ENCODE measurements at regions of chr3 and their contacts with region 1.

Region 1: DNA sequence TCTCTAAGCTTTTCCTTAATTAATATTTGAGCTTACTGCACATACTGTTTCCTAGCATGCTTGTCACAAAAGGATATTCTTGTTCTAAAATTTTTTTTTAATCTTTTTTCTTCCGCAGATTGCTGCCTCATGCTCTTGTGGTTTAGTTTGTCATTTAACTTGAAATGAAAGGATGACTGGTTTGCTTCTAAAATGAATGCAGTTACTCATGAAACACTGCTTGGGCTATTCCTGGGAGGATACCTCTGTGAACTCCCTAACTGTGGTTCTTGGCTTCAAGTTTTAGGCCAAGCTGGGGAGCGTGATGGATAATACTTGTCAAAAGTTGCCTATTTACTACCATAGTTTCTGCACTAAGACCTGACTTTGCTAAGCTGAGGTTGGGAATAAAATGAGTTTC is 64.0 kb downstream of the USP13 start:
- DNase-seq: no peak
- ATAC-seq: peak in 1 of 8 donors; percentile 44
- H3K4me3 ChIP-seq: no peak overlapping the region
- H3K27ac ChIP-seq: peak overlapping the region in 7 of 10 donors; percentile 1 to 89 (median 30)
- H3K4me1 ChIP-seq: peaks cover 0 to 29% (median 9%) of the 10 kb centered on the region in 9 donors
- H3K27me3 ChIP-seq: no peaks in the 10 kb centered on the region
- CTCF ChIP-seq: no peak

Region 2: GRCh38 chr3:179473565-179473964 is 243.2 kb before region 1 on chr3:
- intact Hi-C with region 1: no loop called
- DNase-seq: no peak
- ATAC-seq: peak in 6 of 8 donors; percentile 49 to 78 (median 59)
- H3K4me3 ChIP-seq: no peak overlapping the region
- H3K27ac ChIP-seq: peak overlapping the region in 8 of 10 donors; percentile 3 to 76 (median 48)
- H3K4me1 ChIP-seq: peaks cover 0 to 23% (median 3%) of the 10 kb centered on the region in 9 donors
- H3K27me3 ChIP-seq: no peaks in the 10 kb centered on the region
- CTCF ChIP-seq: no peak

Region 3: GRCh38 chr3:179666436-179667035 is 50.3 kb before region 1 on chr3:
- intact Hi-C with region 1: loop called in 1 of 10 experiments (anchors 5 kb)
- DNase-seq: peak; percentile 73 to 78
- ATAC-seq: peak; percentile 68 to 89 (median 81)
- H3K4me3 ChIP-seq: no peak overlapping the region
- H3K27ac ChIP-seq: peak overlapping the region; percentile 18 to 77 (median 67)
- H3K4me1 ChIP-seq: peaks cover 7 to 83% (median 53%) of the 10 kb centered on the region in 9 donors
- H3K27me3 ChIP-seq: no peaks in the 10 kb centered on the region
- CTCF ChIP-seq: no peak

Region 4: DNA sequence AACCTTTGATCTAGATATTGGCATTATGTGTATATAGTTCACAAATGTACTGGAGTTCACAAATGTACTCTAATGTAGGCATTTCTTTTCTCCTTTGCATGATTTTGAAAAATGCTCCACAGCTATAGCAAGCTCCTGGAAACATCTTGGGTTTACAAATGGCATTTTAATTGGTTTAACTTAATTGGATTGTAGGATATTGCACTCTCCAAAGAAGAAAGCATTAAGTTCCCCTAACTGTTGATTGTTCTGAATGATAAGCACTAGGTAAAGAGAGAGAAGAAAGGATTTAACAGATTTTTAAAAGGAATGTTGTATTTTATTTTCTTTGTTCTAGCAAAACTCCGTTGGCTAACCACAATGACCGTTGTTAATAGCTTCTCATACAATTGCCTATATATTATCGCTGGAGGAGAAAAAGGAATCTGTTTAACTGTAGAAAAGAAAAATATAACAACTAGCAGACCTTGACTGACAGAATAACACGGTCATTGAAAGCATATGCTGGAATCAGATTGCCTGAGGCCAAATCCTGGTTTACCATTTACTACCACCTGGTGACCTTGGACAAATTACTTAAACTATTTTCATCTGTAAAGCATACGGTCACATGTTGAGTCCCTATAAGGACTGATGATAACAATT is 149.2 kb after region 1 on chr3:
- intact Hi-C with region 1: no loop called
- DNase-seq: no peak
- ATAC-seq: no peak
- H3K4me3 ChIP-seq: no peak overlapping the region
- H3K27ac ChIP-seq: no peak overlapping the region
- H3K4me1 ChIP-seq: no peaks in the 10 kb centered on the region
- H3K27me3 ChIP-seq: no peaks in the 10 kb centered on the region
- CTCF ChIP-seq: no peak